HEK293 (cell line): ENCODE measurements at regions of chr15 and their contacts with region 1.

Region 1: DNA sequence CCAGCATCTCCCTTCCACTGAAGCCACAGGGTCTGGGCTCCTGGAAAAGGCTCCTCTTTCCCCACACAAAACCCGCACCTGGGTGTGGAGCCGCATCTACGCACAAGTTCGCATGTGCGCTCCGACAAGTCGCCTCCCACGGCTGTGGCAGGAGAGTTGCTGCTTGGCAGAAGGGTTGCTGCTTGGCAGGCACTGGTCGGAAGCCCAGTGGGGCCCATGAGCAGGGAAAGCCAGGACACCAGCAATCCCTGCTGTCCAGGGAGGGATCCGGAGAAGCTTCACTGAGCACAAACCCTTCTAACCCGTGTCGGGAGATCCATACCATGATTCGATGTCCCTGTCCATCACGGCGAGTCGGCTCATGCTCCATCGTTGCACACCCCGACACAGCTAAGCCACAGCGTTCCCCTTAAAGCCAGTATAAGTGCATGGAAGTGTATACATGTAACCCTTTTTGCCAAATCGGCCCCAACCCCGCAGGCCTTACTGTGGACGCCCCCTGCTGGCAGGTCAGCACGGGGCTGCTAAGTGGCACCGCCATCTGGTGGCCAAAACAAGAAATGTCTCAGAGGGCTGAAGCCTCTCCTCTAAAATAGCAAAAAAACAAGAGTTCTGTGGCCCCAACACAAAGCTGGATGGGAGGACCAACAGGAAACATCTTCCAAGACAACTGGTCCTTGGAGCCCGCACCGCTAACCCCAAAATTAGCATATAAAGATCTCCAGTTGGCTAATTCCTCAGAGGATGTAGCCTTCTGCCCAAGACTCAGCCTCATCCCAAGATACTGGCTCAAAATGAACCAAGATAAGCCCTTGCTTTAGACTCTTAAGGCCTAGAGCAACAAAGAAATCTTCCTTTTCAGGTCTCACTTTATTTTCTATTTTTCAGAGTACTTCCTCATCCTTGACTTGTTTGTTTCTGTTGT is 8.3 kb downstream of the ANKRD63 start:
- H3K4me3 ChIP-seq: no peak overlapping the region
- H3K27ac ChIP-seq: no peak overlapping the region
- H3K4me1 ChIP-seq: no peaks in the 10 kb centered on the region
- CTCF ChIP-seq: peak; percentile 98

Region 2: DNA sequence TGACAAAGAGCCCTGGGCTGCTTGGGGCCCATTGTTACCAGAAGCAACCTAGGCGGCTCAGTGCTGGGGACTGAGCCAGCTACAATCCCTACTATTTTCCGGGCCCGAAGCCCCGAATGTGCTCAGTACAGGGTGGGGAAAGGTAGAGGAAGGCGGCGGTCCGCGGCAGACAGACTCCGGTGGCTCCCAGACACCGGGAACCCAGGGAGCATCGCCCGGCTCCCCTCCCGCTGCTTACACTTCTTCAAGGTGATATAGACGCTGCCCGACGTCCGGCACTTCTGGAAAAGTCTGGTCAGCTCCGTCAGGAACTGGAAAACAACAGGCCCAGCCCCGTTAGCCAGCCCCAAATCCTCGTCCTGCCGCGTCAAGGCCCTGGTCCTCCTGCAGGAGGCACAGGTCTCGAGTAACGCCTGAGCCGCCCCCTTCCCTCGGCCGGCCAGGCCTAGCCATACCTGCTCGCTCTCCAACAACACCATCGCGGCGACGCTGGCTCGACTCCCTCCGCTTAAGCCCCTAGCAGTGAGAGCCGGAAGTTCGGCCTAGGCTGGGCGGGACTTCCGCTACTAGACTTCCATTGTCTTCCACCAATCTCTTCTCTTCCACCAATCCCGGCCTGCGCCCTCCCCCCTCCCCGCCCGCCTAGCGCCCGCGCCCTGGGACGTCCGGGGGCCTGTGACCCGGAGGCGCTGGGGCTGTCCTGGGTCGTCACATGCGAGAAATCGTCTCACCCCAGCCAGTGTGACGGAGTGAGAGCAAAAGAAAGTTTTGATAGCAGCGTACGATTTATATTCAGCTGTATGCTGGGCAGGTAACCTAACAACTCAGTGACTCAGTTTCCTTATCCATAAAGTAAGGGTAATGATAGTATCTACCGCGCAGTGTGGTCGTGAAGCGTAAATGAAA is 235.7 kb before region 1 on chr15 and contains the start of gene SRP14:
- CTCF ChIA-PET with region 1: interaction called, 35 read pairs
- POLR2A ChIA-PET with region 1: interaction called, 3 read pairs
- H3K4me3 ChIP-seq: peak within 1 kb of the TSS; percentile 83
- H3K27ac ChIP-seq: peak within 1 kb of the TSS; percentile 93
- H3K4me1 ChIP-seq: no peaks in the 10 kb centered on the region
- CTCF ChIP-seq: peak; percentile 32; the same call in 1 of the 2 replicates

Region 3: GRCh38 chr15:40054605-40055545 is 219.7 kb before region 1 on chr15:
- CTCF ChIA-PET with region 1: interaction called, 13 read pairs
- POLR2A ChIA-PET with region 1: no interaction called
- H3K4me3 ChIP-seq: no peak overlapping the region
- H3K27ac ChIP-seq: peak overlapping the region; percentile 28; the same call in 1 of the 2 replicates
- H3K4me1 ChIP-seq: peaks cover 7% of the 10 kb centered on the region; the same call in 1 of the 2 replicates
- CTCF ChIP-seq: no peak

Region 4: GRCh38 chr15:40217159-40217824 is 57.3 kb before region 1 on chr15:
- CTCF ChIA-PET with region 1: interaction called, 210 read pairs
- POLR2A ChIA-PET with region 1: interaction called, 9 read pairs
- H3K4me3 ChIP-seq: no peak overlapping the region
- H3K27ac ChIP-seq: no peak overlapping the region
- H3K4me1 ChIP-seq: no peaks in the 10 kb centered on the region
- CTCF ChIP-seq: no peak

Region 5: DNA sequence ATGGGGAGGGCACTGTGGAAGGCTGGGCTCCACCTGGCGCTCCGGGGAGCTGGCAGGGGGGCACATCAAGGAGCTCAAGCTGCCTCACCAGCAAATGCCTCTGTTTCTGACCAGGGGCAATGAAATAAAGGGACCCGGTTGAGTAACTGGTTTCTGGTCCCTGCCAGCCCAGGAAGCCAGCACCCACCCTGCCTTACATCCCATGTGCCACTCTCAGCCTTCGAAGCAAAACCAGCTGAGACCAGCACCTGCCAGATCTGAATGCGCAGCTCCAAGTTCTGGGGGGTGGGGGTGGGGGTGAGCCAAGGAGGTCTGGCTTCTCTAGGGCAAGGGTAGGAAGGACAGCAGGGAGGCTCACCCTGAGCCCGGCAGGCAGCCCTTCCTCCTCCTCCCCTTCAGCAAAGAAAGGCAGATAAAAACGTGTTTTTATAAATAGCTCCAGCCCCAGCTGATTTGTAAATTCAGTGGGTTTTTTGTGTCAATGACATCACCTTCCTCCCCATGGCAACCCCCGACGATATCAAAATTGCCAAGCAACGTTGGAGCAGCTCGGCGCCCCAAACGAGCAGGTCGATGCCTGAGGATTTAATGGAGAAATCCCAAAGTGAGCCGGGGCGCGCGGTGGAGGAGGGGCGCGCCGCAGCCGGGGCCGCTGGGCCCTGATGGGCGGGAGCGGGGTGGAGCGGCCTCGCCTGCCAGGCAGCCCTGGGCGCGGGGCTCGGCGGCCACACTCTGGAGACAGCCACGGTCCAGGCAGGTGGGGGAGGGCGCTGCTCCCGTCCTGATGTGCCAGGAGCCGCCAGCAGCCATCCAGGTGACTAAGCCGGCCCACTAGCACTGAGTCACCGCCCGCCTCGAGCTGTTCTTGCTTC is 35.8 kb before region 1 on chr15 and contains the start of gene PAK6:
- CTCF ChIA-PET with region 1: interaction called, 68 read pairs
- POLR2A ChIA-PET with region 1: no interaction called
- H3K4me3 ChIP-seq: peak within 1 kb of the TSS; percentile 26
- H3K27ac ChIP-seq: no peak within 1 kb of the TSS; the same call in 1 of the 2 replicates
- H3K4me1 ChIP-seq: peaks cover 5% of the 10 kb centered on the region; the same call in 1 of the 2 replicates
- CTCF ChIP-seq: no peak

Region 6: GRCh38 chr15:40263024-40263754 is 11.4 kb before region 1 on chr15:
- CTCF ChIA-PET with region 1: interaction called, 66 read pairs
- POLR2A ChIA-PET with region 1: no interaction called
- H3K4me3 ChIP-seq: no peak overlapping the region
- H3K27ac ChIP-seq: peak overlapping the region; percentile 34; the same call in 1 of the 2 replicates
- H3K4me1 ChIP-seq: peaks cover 22% of the 10 kb centered on the region
- CTCF ChIP-seq: no peak

Region 7: GRCh38 chr15:40307421-40308211 is 33.0 kb after region 1 on chr15 and contains the start of gene PLCB2:
- CTCF ChIA-PET with region 1: interaction called, 248 read pairs
- POLR2A ChIA-PET with region 1: interaction called, 4 read pairs
- H3K4me3 ChIP-seq: no peak within 1 kb of the TSS
- H3K27ac ChIP-seq: no peak within 1 kb of the TSS; the same call in 1 of the 2 replicates
- H3K4me1 ChIP-seq: no peaks in the 10 kb centered on the region
- CTCF ChIP-seq: peak; percentile 52

Region 8: GRCh38 chr15:40618023-40618422 is 343.4 kb after region 1 on chr15:
- CTCF ChIA-PET with region 1: no interaction called
- POLR2A ChIA-PET with region 1: no interaction called
- H3K4me3 ChIP-seq: no peak overlapping the region
- H3K27ac ChIP-seq: no peak overlapping the region
- H3K4me1 ChIP-seq: no peaks in the 10 kb centered on the region
- CTCF ChIP-seq: no peak